CD8-positive, alpha-beta T cell (primary cell): ENCODE measurements at regions of chr9 and their contacts with region 1.

Region 1: DNA sequence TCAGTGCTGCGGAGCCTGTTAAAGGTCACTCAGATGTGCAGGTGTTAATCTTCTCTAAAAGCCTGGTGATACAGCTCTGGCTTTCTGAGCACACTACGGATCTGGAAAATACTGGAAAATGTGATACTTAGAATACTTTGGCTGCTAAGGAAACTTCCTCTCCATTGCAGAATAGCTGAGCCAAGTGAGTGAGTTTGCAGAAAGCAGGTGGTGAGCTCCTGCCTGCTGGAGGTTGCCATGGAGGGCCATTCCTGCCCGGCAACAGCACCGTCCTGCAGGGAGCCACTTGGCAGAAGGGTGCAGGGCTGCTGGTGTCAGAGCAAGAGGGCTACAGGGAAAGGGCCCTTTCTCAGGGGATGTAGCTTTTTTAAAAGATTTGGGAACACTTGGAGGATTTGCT is 40.7 kb downstream of the SECISBP2 start:
- DNase-seq: no peak
- ATAC-seq: no peak
- H3K4me3 ChIP-seq: no peak overlapping the region
- H3K4me3 Mint-ChIP-seq: no peak overlapping the region
- H3K27ac ChIP-seq: no peak overlapping the region
- H3K27ac Mint-ChIP-seq: no peak overlapping the region
- H3K4me1 ChIP-seq: no peaks in the 10 kb centered on the region
- H3K4me1 Mint-ChIP-seq: peaks cover 1% of the 10 kb centered on the region
- H3K27me3 ChIP-seq: no peaks in the 10 kb centered on the region
- H3K27me3 Mint-ChIP-seq: no peaks in the 10 kb centered on the region
- CTCF ChIP-seq: no peak

Region 2: GRCh38 chr9:89046832-89047231 is 312.2 kb before region 1 on chr9:
- CTCF ChIA-PET with region 1: no interaction called
- POLR2A ChIA-PET with region 1: no interaction called
- intact Hi-C with region 1: no loop called
- DNase-seq: no peak
- ATAC-seq: no peak
- H3K4me3 ChIP-seq: no peak overlapping the region
- H3K4me3 Mint-ChIP-seq: no peak overlapping the region
- H3K27ac ChIP-seq: no peak overlapping the region
- H3K27ac Mint-ChIP-seq: no peak overlapping the region
- H3K4me1 ChIP-seq: no peaks in the 10 kb centered on the region
- H3K4me1 Mint-ChIP-seq: no peaks in the 10 kb centered on the region
- H3K27me3 ChIP-seq: no peaks in the 10 kb centered on the region
- H3K27me3 Mint-ChIP-seq: peaks cover 10% of the 10 kb centered on the region
- CTCF ChIP-seq: no peak

Region 3: DNA sequence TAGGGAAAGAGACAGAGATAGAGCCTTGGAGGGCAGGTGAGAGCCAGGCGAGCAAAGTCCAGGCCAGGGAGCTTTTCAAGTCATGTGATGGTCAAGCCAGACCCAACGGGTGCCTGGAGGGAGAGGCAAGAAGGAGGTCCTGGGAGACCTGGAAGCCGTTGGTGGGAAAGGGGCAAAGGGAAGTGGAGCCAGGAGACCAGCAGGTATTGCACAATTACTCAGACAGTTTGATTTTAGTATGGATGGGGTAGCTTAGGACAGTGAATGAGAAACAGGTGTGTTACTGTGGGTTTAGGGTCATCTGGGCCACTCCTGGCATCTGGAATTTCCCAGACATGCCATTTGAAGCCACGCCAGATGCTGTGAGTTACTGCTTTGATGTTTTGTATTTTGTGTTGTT is 35.6 kb before region 1 on chr9:
- CTCF ChIA-PET with region 1: no interaction called
- POLR2A ChIA-PET with region 1: no interaction called
- intact Hi-C with region 1: loop called (anchors 5 kb)
- DNase-seq: no peak
- ATAC-seq: no peak
- H3K4me3 ChIP-seq: no peak overlapping the region
- H3K4me3 Mint-ChIP-seq: peak overlapping the region; percentile 8
- H3K27ac ChIP-seq: no peak overlapping the region
- H3K27ac Mint-ChIP-seq: peak overlapping the region; percentile 60
- H3K4me1 ChIP-seq: peaks cover 31% of the 10 kb centered on the region
- H3K4me1 Mint-ChIP-seq: peaks cover 62% of the 10 kb centered on the region
- H3K27me3 ChIP-seq: no peaks in the 10 kb centered on the region
- H3K27me3 Mint-ChIP-seq: no peaks in the 10 kb centered on the region
- CTCF ChIP-seq: no peak